GM10248 (cell line): ENCODE measurements at regions of chr12 and their contacts with region 1.

Region 1: GRCh38 chr12:49496417-49497360 is 42.1 kb upstream of the KCNH3 start:
- DNase-seq: no peak
- CTCF ChIP-seq: no peak

Region 2: DNA sequence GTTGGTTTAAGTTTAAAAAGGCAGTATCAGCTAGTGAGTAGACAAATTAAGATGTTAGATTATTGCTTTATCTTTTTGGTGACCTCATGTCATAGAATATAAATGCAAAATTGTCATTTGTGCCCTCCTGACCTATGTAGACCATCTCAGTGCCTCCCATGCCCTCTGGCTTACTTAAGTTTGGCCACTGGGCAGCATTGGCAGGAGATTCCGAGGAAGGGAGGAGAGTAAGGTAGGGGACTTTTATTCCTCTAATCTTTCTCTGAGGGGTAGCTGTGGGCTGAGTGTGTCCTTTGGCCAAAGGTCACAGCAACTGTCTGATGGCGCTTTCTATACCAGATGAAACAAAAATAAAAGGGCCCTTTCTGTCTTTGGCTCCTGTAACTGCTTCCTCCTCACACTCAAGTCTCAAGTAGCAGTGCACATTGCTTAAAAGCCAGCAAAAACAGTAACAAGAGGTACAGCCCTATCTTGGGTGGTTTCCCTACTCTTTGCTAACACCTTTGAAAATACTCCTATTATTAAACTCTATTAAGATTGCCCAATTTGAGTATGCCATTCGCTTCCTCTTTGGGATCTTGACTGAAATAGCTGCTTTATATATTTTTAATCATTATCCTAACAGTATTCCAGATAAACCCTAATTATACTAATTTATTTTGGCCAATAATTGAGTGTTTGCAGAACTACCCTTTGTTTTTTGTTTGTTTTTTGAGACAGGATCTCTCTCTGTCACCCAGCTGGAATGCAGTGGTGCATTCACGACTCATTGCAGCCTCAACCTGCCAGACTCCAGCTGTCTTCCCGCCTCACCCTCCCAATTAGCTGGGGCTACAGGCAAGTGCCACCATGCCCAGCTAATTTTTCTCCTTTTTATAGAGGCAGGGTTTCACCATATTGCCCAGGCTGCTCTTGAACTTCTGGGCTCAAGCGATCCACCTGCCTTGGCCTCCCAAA is 14.3 kb before region 1 on chr12:
- CTCF ChIA-PET with region 1: interaction called, 27 read pairs
- POLR2A ChIA-PET with region 1: no interaction called
- DNase-seq: no peak
- CTCF ChIP-seq: no peak